Right cardiac atrium (tissue), 5 donors: ENCODE measurements at regions of chr12 and their contacts with region 1.

Region 1: GRCh38 chr12:54993161-54993835 is 8.7 kb upstream of the TESPA1 start:
- DNase-seq: no peak
- ATAC-seq: peak; percentile 64 to 75
- H3K4me3 ChIP-seq: no peak overlapping the region
- H3K27ac ChIP-seq: no peak overlapping the region
- H3K4me1 ChIP-seq: no peaks in the 10 kb centered on the region
- H3K27me3 ChIP-seq: peaks cover 2% of the 10 kb centered on the region

Region 2: GRCh38 chr12:54935235-54935951 is 57.9 kb before region 1 on chr12:
- intact Hi-C with region 1: no loop called
- DNase-seq: no peak
- ATAC-seq: peak in 1 of 2 donors; percentile 71
- H3K4me3 ChIP-seq: no peak overlapping the region
- H3K27ac ChIP-seq: no peak overlapping the region
- H3K4me1 ChIP-seq: no peaks in the 10 kb centered on the region
- H3K27me3 ChIP-seq: no peaks in the 10 kb centered on the region

Region 3: GRCh38 chr12:55073043-55074022 is 80.0 kb after region 1 on chr12:
- intact Hi-C with region 1: loop called (anchors 2 to 5 kb)
- DNase-seq: peak; percentile 63 to 84 (median 78)
- ATAC-seq: peak; percentile 57 to 69
- H3K4me3 ChIP-seq: no peak overlapping the region
- H3K27ac ChIP-seq: no peak overlapping the region
- H3K4me1 ChIP-seq: no peaks in the 10 kb centered on the region
- H3K27me3 ChIP-seq: no peaks in the 10 kb centered on the region

Region 4: DNA sequence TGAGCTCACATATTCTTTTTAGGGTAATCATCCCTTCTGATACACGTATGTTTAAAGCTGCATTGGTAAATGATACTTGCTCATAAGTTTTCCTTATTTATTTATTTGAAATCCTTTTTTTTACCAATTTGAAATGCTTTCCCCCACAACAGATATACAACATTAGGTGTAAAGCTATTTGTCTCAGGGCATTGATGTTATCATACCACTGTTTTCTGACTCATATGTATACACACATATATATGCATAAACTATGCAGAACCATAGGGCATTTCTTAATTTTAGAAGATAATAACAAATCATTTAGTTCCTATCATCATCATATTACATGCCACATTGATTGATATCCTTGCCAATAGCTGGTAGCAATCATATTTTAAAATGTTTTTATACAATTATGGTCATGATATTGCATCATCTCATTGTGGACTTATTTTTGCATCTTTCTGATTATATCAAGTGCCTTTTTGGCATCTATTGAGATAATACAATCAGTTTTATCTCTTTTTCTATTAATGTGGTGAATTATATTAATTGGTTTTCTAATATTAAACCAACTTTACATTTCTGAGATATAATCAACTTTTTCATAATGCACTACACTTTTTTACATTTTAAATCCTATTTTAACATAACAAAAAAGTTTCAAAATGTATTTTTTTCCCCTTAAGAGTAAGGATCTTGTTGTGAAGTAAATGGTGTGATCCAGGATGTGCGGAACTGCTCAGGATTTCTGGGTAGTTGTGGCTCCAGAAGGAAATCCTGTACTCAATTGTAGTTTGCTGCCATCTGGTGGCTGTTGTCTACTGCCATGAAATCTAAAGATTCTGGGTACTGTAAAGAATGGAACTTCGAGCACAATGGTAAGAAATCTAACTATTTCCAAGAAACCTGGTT is 149.6 kb after region 1 on chr12:
- intact Hi-C with region 1: loop called in 1 of 4 experiments (anchors 10 kb)
- DNase-seq: peak in 1 of 3 donors; percentile 23
- ATAC-seq: no peak
- H3K4me3 ChIP-seq: no peak overlapping the region
- H3K27ac ChIP-seq: no peak overlapping the region
- H3K4me1 ChIP-seq: no peaks in the 10 kb centered on the region
- H3K27me3 ChIP-seq: no peaks in the 10 kb centered on the region